ENCODE measurements at regions of chr5 and their contacts with region 1.

Region 1: DNA sequence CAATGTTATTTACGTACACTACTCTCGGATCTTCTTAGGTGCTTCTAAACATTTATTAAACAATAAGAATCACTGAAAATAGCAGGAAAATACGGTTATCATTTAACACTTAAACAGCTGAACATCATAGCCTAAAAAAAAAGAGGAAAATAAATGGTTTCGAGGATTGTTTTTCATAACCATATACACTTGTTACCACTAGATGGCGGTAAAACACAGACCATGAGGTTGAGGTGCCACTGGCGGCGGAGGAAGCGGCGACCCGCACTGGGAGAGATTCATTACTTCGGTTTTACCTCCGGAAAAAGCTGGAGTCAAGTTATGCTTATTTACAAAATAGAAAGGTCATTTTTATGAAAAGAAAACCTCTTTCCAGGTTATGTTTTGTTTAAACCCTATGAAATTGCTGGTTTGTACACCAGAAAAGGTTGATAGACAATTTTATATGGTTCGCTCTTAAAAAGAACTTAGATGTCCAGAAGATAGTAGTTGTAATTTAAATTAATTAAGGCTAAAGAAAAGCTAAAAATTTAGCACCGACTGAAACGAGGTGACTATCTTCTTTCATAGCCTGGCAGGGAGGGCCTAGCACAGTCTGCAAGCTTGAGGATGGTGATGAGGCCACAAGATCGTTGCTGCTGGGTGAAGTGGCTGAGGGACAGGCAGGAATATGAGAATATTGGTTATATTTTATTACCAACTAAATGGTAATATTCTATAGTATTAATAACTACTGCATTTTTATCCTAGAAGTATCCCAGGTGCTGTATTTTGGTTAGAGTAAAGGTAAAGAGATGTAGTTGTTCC is 605.7 kb downstream of the RAB3C start:
- DNase-seq: no peak
- H3K4me3 ChIP-seq: no peak overlapping the region
- H3K27me3 ChIP-seq: peaks cover 4% of the 10 kb centered on the region
- CTCF ChIP-seq: peak; percentile 61

Region 2: GRCh38 chr5:59174248-59174844 is 14.3 kb before region 1 on chr5:
- CTCF ChIA-PET with region 1: interaction called, 21 read pairs
- POLR2A ChIA-PET with region 1: no interaction called
- DNase-seq: no peak
- H3K4me3 ChIP-seq: no peak overlapping the region
- H3K27me3 ChIP-seq: no peaks in the 10 kb centered on the region
- CTCF ChIP-seq: peak; percentile 89

Region 3: DNA sequence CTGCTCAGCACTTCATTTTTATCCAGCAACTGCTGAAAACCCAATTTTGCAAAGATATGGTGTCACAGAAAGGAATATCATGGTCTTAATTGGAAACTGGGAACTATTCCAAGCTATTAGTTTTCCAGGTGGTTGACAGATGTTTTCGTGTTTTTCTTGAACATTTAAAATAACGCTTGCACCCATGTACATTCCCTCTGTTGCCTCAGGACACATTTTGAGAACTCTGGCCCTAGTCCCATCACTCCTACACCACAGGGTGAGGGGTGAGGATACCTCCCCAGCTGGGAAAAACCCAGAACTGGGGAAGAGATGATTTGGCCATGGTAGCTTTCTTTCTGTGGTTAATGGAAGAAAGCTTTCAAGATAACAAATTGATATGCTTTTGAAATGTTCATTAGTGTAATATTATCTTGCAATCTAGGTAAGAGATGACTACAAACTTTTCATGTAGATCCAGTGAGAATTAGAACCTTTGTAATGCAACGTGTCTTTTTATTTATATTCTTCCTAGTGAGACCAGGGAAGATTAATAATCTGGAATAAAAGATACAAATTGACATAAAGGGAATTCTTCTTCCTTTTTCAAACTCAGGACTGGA is 21.2 kb after region 1 on chr5:
- CTCF ChIA-PET with region 1: interaction called, 21 read pairs
- POLR2A ChIA-PET with region 1: no interaction called
- DNase-seq: peak; percentile 52
- H3K4me3 ChIP-seq: no peak overlapping the region
- H3K27me3 ChIP-seq: peaks cover 4% of the 10 kb centered on the region; the same call in 1 of the 2 replicates
- CTCF ChIP-seq: no peak

Region 4: DNA sequence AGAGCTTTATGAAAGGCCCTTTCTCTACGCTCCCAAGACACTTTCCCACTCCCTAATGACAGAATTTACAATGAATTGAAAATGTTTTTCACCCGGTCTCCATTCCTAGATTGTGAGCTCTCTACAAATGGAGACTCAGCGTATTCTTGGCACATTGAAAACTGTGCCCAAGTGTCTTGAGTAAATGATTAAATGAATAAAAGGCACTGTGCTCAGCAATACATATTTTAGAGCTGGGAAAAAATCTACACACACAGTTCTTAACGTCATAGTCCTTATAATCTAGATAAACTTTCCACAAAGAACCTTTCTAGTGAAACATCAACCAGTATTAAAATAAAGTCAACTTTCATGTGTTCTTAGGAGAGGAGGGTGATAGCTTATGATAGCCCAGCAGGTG is 28.2 kb after region 1 on chr5:
- CTCF ChIA-PET with region 1: interaction called, 21 read pairs
- POLR2A ChIA-PET with region 1: no interaction called
- DNase-seq: no peak
- H3K4me3 ChIP-seq: no peak overlapping the region
- H3K27me3 ChIP-seq: peaks cover 4% of the 10 kb centered on the region; the same call in 1 of the 2 replicates
- CTCF ChIP-seq: no peak

Region 5: DNA sequence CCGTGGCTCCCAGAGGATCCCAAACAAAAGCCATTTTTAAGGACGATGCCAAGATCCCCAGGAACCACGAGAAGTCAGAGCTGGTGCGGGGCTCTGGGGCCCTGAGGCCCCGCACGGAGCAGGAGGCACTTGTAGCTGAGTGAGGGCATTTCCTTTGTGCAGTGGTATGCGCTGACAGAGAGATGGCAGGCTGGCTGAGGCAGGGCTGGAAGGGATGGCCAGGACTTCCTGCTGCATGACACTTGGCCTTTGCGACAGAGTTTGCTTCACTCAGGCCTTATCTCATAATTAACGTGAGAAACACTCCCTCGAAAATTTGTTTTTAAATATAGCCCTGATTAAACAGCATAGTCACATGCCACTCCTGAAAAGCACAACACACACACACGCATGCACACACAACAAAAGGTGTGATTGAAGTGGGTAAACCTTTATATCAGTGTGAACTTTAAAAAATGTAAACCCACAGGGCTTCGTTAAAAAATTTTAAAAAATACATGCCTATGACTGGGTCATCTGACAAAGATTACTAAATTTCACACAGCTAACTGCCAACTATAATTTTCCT is 168.3 kb after region 1 on chr5:
- CTCF ChIA-PET with region 1: interaction called, 14 read pairs
- POLR2A ChIA-PET with region 1: no interaction called
- DNase-seq: no peak
- H3K4me3 ChIP-seq: no peak overlapping the region
- H3K27me3 ChIP-seq: peaks cover 6% of the 10 kb centered on the region
- CTCF ChIP-seq: no peak

Region 6: GRCh38 chr5:59380350-59380951 is 191.8 kb after region 1 on chr5:
- CTCF ChIA-PET with region 1: interaction called, 279 read pairs
- POLR2A ChIA-PET with region 1: interaction called, 5 read pairs
- DNase-seq: peak; percentile 62
- H3K4me3 ChIP-seq: no peak overlapping the region
- H3K27me3 ChIP-seq: peaks cover 2% of the 10 kb centered on the region; the same call in 1 of the 2 replicates
- CTCF ChIP-seq: peak; percentile 48

Measured in BJ (cell line).